Activated CD8-positive, alpha-beta memory T cell treated with anti-CD3 and anti-CD28 coated beads, Interleukin-2, amount 10 ng/mL, durations not matched to agents 7 days and 5 days (primary cell): ENCODE measurements at regions of chr16 and their contacts with region 1.

Region 1: GRCh38 chr16:89289428-89290395 is 72.2 kb downstream of the ZNF778 start:
- DNase-seq: peak; percentile 81
- ATAC-seq: peak; percentile 91
- H3K4me3 Mint-ChIP-seq: no peak overlapping the region
- H3K27ac Mint-ChIP-seq: peak overlapping the region; percentile 18
- H3K4me1 Mint-ChIP-seq: peaks cover 6% of the 10 kb centered on the region
- H3K27me3 Mint-ChIP-seq: no peaks in the 10 kb centered on the region

Region 2: DNA sequence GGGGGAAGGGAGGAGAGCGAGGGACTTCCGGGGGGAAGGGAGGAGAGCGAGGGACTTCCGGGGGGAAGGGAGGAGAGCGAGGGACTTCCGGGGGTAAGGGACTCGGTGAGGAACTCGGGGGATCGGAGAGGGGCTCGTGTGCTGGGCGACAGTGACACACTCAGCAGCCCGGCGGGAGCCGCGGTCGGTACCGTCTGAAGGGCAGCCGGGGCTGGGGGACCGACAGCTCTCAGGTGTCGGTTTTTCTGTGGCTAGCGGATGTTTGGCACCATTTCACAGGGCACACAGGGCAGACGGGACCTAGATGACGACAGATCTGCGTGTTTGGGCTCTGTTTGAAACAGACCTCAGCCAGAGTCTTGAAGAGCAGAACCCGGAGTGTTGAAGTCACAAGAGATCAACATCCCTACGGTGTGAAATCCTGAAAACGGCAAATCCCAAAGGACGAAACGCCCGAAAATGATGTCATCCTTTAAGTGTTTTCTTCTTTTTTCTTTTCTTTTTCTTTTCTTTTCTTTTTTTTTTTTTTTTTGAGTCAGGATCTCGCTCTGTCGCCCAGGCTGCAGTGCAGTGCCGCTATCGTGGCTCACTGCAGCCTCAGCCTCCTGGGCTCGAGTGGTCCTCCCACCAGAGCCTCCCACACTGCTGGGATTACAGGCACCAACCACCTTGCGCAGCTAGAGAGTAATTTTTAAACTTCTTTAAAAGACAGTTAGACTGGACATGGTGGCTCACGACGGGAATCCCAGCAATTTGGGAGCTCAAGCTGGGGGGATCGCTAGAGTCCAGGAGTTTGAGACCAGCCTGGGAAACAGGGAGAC is 48.3 kb before region 1 on chr16:
- CTCF ChIA-PET with region 1: interaction called, 11 read pairs
- DNase-seq: peak; percentile 89
- ATAC-seq: peak; percentile 81
- H3K4me3 Mint-ChIP-seq: peak overlapping the region; percentile 93
- H3K27ac Mint-ChIP-seq: peak overlapping the region; percentile 97
- H3K4me1 Mint-ChIP-seq: peaks cover 21% of the 10 kb centered on the region
- H3K27me3 Mint-ChIP-seq: no peaks in the 10 kb centered on the region

Region 3: DNA sequence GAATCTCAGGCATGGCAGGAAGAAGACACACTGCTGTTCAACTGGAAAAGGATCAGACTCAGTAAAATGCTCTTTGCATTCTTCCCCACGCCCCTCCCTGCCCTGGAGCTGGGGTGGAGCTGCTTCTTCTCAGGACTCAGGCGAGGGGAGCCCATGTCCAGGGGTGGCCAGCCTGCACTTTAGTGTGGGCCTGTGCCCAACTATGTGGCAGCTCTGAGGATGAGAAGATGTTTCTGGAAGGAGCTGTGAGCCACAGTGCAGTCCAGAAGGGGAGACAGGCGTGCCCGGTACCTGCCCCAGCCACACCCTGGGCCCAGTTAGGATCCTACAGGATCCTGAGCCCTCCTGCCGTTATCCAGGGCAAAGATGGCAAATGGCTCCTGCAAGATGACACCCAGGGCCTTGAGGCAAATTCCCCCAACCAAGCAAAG is 80.4 kb after region 1 on chr16:
- CTCF ChIA-PET with region 1: no interaction called
- DNase-seq: no peak
- ATAC-seq: no peak
- H3K4me3 Mint-ChIP-seq: no peak overlapping the region
- H3K27ac Mint-ChIP-seq: peak overlapping the region; percentile 56
- H3K4me1 Mint-ChIP-seq: peaks cover 70% of the 10 kb centered on the region
- H3K27me3 Mint-ChIP-seq: no peaks in the 10 kb centered on the region

Region 4: DNA sequence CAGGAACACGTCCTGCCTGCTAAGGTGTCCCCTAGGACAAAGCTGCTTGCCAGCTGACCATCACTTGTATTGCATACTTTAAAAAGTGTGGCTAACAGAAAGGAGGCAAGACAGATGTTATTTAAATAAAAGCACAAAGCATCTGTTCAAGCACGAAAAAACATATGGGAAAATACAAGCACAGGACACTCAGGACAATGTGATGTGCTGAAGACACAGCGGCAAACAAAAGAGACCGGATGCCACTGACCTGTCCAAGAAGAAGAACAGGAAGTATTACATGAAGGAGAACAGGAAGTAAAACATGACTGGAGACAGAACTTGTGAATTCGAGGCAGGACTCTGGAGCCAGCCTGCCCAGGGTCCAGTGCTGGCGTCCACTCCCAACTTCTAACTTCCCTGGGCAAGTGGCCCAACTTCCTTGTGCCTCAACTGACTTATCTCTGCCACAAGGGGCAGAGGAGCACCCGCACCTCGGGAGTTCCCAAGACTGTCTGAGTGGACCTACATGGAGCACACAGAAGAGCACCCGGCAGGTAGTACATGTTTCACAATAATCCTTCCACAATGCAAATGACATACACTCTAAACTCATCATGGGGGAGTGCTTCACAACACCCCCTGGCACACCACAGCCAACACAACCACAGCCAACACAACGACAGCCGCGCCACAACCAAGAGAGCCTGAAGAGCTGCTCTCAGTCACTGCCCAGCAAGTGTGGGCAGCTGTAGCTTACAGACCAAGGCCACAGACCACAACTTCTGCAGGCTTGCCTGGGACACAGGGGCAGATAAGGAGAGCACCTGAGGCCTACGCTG is 164.0 kb after region 1 on chr16:
- CTCF ChIA-PET with region 1: no interaction called
- DNase-seq: peak; percentile 66
- ATAC-seq: peak; percentile 35
- H3K4me3 Mint-ChIP-seq: peak overlapping the region; percentile 10
- H3K27ac Mint-ChIP-seq: peak overlapping the region; percentile 78
- H3K4me1 Mint-ChIP-seq: peaks cover 78% of the 10 kb centered on the region
- H3K27me3 Mint-ChIP-seq: no peaks in the 10 kb centered on the region